ENCODE measurements at regions of chr10 and their contacts with region 1.

Region 1: DNA sequence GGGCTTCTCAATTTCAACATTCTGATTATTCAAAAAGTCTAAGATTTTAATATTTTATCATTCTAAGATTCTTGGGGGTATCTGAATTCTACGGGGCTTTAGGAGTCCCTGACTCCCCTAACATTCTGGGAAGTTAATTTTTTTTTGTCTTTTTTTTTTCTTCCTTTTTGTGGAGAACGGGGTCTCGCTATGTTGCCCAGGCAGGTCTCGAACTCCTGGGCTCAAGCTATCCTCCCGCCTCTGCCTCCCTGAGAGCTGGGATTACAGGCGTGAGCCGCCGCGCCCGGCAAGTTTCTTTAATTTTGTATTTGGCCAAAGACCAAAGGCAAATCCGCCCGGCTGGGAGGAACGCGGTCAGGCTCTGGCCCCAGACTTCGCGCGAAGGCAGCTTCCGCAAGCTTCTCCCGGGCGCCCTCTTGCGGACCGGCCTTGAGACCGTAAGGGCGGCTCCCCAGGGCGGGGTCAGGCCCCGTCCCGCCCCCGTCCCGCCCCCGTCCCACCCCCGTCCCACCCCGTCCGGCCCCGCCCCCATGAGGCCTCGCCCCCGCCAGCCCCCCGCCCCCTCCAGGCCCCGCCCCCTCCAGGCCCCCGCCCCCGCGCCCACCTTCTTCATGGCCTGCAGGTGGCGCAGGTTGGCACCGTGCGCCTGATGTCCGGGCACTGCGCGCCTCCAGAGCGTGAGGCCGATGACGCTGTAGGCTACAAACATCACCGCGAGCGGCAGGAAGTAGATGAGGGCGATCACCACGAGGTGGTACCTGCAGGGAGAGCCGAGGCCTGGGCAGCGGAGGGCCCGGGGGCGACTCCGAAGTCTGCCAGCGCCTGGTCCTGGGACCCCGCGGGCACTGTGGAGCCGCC is 8.2 kb downstream of the TACR2 start:
- DNase-seq: peak; percentile 93
- H3K4me3 Mint-ChIP-seq: peak overlapping the region; percentile 46
- H3K27ac Mint-ChIP-seq: peak overlapping the region; percentile 76
- H3K4me1 Mint-ChIP-seq: peaks cover 15% of the 10 kb centered on the region
- H3K27me3 Mint-ChIP-seq: peaks cover 2% of the 10 kb centered on the region

Region 2: DNA sequence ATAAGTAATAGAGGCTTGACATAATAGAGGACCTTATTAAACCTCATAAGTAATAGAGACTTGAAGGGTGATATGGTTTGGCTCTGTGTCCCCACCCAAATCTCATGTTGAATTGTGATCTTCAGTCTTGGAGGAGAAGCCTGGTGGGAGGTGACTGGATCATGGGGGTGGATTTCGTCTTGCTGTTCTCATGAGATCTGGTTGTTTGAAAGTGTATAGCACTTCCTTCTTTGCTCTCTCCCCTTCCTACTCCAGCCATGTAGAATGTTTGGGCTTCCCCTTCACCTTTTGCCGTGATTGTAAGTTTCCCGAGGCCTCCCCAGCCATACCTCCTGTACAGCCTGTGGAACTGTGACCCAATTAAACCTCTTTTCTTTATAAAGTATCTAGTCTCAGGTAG is 411.3 kb before region 1 on chr10:
- CTCF ChIA-PET with region 1: no interaction called
- POLR2A ChIA-PET with region 1: no interaction called
- intact Hi-C with region 1: loop called (anchors 5 kb)
- DNase-seq: peak; percentile 33
- H3K4me3 Mint-ChIP-seq: peak overlapping the region; percentile 40
- H3K27ac Mint-ChIP-seq: peak overlapping the region; percentile 94
- H3K4me1 Mint-ChIP-seq: peaks cover 52% of the 10 kb centered on the region
- H3K27me3 Mint-ChIP-seq: no peaks in the 10 kb centered on the region

Region 3: GRCh38 chr10:69232252-69232651 is 176.3 kb before region 1 on chr10:
- CTCF ChIA-PET with region 1: interaction called, 28 read pairs
- POLR2A ChIA-PET with region 1: no interaction called
- intact Hi-C with region 1: loop called (anchors 1 kb)
- DNase-seq: no peak
- H3K4me3 Mint-ChIP-seq: no peak overlapping the region
- H3K27ac Mint-ChIP-seq: no peak overlapping the region
- H3K4me1 Mint-ChIP-seq: peaks cover 47% of the 10 kb centered on the region
- H3K27me3 Mint-ChIP-seq: no peaks in the 10 kb centered on the region

Region 4: GRCh38 chr10:69392481-69393000 is 16.0 kb before region 1 on chr10:
- CTCF ChIA-PET with region 1: interaction called, 27 read pairs
- POLR2A ChIA-PET with region 1: interaction called, 3 read pairs
- intact Hi-C with region 1: no loop called
- DNase-seq: peak; percentile 89
- H3K4me3 Mint-ChIP-seq: no peak overlapping the region
- H3K27ac Mint-ChIP-seq: peak overlapping the region; percentile 67
- H3K4me1 Mint-ChIP-seq: peaks cover 11% of the 10 kb centered on the region
- H3K27me3 Mint-ChIP-seq: no peaks in the 10 kb centered on the region

Region 5: GRCh38 chr10:69451209-69451783 is 42.7 kb after region 1 on chr10 and contains the start of gene TSPAN15:
- CTCF ChIA-PET with region 1: interaction called, 12 read pairs
- POLR2A ChIA-PET with region 1: no interaction called
- intact Hi-C with region 1: no loop called
- DNase-seq: peak; percentile 88
- H3K4me3 Mint-ChIP-seq: peak within 1 kb of the TSS; percentile 82
- H3K27ac Mint-ChIP-seq: no peak within 1 kb of the TSS
- H3K4me1 Mint-ChIP-seq: peaks cover 14% of the 10 kb centered on the region
- H3K27me3 Mint-ChIP-seq: no peaks in the 10 kb centered on the region
- total RNA-seq, gene TSPAN15: 2.5 to 3.1 TPM

Region 6: GRCh38 chr10:69629897-69630650 is 221.5 kb after region 1 on chr10 and contains the start of gene FAM241B:
- CTCF ChIA-PET with region 1: interaction called, 6 read pairs
- POLR2A ChIA-PET with region 1: no interaction called
- intact Hi-C with region 1: loop called (anchors 5 kb)
- DNase-seq: peak; percentile 87
- H3K4me3 Mint-ChIP-seq: peak within 1 kb of the TSS; percentile 67
- H3K27ac Mint-ChIP-seq: no peak within 1 kb of the TSS
- H3K4me1 Mint-ChIP-seq: peaks cover 5% of the 10 kb centered on the region
- H3K27me3 Mint-ChIP-seq: no peaks in the 10 kb centered on the region
- total RNA-seq, gene FAM241B: 10.9 to 11.8 TPM

Measured in activated CD4-positive, alpha-beta memory T cell treated with anti-CD3 and anti-CD28 coated beads for 36 hours (primary cell).